ENCODE measurements at regions of chr11 and their contacts with region 1.

Region 1: DNA sequence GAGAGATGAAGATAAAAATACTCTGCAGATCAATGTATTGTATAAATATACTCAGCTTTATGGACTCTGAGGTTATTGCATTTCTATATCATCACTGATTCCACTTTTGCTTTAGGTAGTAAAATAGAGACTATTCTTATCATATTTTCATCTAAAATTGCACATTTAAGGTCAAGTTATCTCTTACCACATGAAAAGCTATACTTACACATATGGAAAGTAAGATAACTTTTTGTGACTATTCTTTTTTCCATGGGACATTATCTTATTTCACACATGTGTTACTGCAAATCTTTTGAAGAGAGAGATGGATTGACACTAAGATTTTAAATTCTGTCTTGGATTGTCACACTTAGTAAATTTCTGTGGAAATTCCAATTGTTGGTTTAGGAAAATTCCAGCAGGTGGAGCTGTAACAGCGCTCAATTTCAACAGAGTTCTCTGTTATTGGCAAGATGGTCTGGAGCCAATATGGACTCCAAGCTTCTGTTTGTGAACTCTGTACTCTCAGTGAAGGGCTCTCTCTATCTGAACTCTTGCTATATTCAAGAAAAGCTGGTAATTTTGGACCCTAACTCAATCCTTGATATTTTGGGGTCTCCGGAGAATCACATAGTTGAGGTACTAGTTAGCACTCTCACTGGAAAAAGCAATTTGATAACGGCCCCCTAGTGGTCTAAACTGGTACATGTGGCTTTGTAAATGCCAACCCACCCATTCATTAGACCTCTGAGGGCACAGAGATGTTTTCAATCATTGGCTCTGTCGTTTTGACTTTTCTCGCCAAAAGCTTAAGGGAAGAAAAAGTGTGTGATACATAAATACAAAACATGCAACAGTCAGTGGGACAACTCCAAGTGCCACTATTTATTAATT is 429.7 kb downstream of the ETS1 start:
- DNase-seq: peak in 1 of 2 donors; percentile 54
- ATAC-seq: peak in 7 of 8 donors; percentile 76 to 91 (median 83)
- H3K4me3 ChIP-seq: peak overlapping the region in 4 of 10 donors; percentile 7 to 26 (median 15)
- H3K27ac ChIP-seq: no peak overlapping the region
- H3K4me1 ChIP-seq: peaks cover 0 to 13% (median 5%) of the 10 kb centered on the region in 9 donors
- H3K27me3 ChIP-seq: no peaks in the 10 kb centered on the region
- CTCF ChIP-seq: peak; percentile 74 to 92 (median 85)

Region 2: GRCh38 chr11:128026596-128026995 is 131.1 kb before region 1 on chr11:
- intact Hi-C with region 1: loop called in 9 of 10 experiments (anchors 1 to 10 kb)
- DNase-seq: no peak
- ATAC-seq: no peak
- H3K4me3 ChIP-seq: no peak overlapping the region
- H3K27ac ChIP-seq: no peak overlapping the region
- H3K4me1 ChIP-seq: peaks cover 0 to 12% (median 0%) of the 10 kb centered on the region in 9 donors
- H3K27me3 ChIP-seq: peaks cover 0 to 17% (median 3%) of the 10 kb centered on the region in 7 donors
- CTCF ChIP-seq: no peak

Region 3: DNA sequence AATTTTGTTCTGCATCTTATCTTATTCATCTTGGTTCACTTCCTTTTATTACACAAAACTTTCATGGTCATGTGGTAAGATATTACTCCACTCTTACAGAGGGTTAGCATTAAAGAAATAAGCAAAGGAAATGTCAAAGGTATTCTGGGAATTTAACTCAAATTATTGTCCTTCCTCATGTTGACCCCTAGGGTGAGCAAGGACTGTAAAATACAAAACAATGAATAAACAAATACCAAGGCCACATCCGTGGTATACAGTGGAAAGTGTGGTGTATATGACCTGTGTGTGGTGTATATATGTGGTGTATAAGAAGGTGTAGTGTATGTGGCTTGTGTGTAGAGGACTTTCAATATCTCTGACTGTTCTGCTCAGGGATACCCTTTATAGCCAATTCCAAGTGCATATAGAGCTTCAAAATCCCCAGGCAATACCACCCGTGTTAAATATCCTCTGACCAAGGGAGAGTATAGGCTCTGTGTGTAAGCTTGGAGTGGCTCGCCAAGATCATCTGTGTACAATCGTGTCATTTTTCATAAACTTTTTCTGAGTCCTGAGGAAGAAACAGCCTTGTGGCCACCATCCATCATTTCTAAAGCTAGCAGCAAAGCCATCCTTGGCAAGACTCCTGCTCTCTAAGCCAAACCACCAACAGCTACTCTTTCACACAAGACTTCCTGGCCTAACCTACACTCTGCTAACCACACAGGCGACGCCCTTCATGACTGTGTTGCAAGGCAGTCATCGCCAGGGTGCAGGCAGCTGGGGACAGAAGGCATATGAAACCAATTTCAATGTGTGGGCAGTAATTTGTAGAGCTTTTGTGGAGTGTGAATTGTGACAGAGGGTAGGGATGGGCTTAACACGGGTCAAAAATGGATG is 118.3 kb before region 1 on chr11:
- intact Hi-C with region 1: loop called in 6 of 10 experiments (anchors 5 to 10 kb)
- DNase-seq: peak; percentile 4 to 21
- ATAC-seq: peak in 7 of 8 donors; percentile 33 to 79 (median 58)
- H3K4me3 ChIP-seq: no peak overlapping the region
- H3K27ac ChIP-seq: peak overlapping the region in 1 of 10 donors; percentile 78
- H3K4me1 ChIP-seq: peaks cover 0 to 36% (median 0%) of the 10 kb centered on the region in 9 donors
- H3K27me3 ChIP-seq: peaks cover 0 to 11% (median 0%) of the 10 kb centered on the region in 7 donors
- CTCF ChIP-seq: no peak

Region 4: GRCh38 chr11:128848815-128849455 is 691.3 kb after region 1 on chr11:
- intact Hi-C with region 1: loop called in 3 of 10 experiments (anchors 5 to 10 kb)
- DNase-seq: peak; percentile 62 to 75
- ATAC-seq: peak in 5 of 8 donors; percentile 33 to 81 (median 47)
- H3K4me3 ChIP-seq: no peak overlapping the region
- H3K27ac ChIP-seq: no peak overlapping the region
- H3K4me1 ChIP-seq: peaks cover 0 to 20% (median 5%) of the 10 kb centered on the region in 9 donors
- H3K27me3 ChIP-seq: no peaks in the 10 kb centered on the region
- CTCF ChIP-seq: peak; percentile 26 to 82 (median 69)

Region 5: DNA sequence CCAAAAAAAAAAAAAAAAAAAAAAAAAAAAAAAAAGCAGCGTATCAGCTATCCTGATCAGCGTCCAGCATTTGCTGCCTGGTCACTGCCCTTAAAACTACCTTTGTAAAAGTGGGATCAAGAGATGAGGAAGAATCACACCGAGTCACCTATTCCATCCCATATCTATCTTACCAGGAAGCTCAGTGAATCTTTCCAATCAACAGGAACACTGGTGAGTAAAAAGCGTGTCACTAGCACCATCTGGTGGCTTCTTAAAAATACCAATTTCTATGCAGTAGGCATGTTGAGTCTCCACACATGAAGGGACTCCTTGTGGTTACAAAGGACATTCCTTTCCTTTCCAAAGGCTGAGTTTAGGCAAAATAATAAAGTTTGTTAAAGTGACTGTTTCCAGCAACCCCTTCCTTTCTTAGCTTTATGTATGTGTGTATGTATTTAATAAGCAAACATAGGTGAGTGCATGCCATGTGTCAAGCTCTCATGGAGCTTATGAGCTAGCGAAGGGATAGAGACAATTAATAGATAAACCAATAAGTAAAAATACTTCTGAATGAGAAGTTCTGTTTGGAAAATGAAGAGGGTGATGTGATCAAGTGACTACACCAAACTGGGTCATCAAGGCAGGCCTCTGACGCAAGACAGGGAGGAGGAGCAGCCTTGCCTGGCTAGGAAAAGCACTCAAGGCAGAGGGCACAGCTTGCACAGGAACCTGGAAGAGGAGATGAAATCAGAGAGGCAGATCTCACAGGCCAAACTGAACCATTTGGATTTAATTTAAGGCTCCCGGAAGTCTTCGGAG is 798.9 kb after region 1 on chr11:
- intact Hi-C with region 1: loop called in 4 of 10 experiments (anchors 5 to 10 kb)
- DNase-seq: peak in 1 of 2 donors; percentile 58
- ATAC-seq: peak; percentile 59 to 89 (median 83)
- H3K4me3 ChIP-seq: no peak overlapping the region
- H3K27ac ChIP-seq: no peak overlapping the region
- H3K4me1 ChIP-seq: no peaks in the 10 kb centered on the region
- H3K27me3 ChIP-seq: peaks cover 0 to 20% (median 6%) of the 10 kb centered on the region in 7 donors
- CTCF ChIP-seq: peak; percentile 43 to 82 (median 75)